Activated CD4-positive, alpha-beta T cell treated with anti-CD3 and anti-CD28 coated beads for 36 hours (primary cell): ENCODE measurements at regions of chr15 and their contacts with region 1.

Region 1: DNA sequence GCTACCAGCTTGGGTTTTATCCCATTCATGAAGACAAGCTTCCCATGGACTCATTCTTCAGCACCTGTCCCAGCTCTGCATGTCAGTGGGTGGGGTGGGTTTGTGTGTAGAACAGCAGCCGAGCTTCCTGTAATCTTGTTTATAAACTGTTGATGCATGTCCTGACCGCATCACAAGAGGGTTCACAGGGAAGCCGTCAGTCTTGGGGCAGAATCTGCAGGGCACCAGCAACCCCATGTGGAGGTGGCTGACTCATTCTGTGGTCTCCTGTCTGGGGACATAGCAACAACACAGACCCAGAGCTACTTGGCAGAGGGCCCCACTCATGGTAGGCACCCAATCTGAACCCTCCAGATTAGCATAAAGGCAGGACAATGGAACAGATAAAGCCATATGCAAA is 35.6 kb downstream of the DAPK2 start:
- DNase-seq: peak; percentile 90
- ATAC-seq: peak; percentile 78
- H3K4me3 Mint-ChIP-seq: peak overlapping the region; percentile 31
- H3K27ac Mint-ChIP-seq: peak overlapping the region; percentile 87
- H3K4me1 Mint-ChIP-seq: peaks cover 45% of the 10 kb centered on the region
- H3K27me3 Mint-ChIP-seq: no peaks in the 10 kb centered on the region

Region 2: GRCh38 chr15:63374686-63375520 is 635.8 kb before region 1 on chr15:
- CTCF ChIA-PET with region 1: interaction called, 4 read pairs
- POLR2A ChIA-PET with region 1: no interaction called
- intact Hi-C with region 1: loop called in 1 of 2 experiments (anchors 2 kb)
- DNase-seq: peak; percentile 73
- ATAC-seq: peak; percentile 25
- H3K4me3 Mint-ChIP-seq: peak overlapping the region; percentile 15
- H3K27ac Mint-ChIP-seq: peak overlapping the region; percentile 67
- H3K4me1 Mint-ChIP-seq: peaks cover 51% of the 10 kb centered on the region
- H3K27me3 Mint-ChIP-seq: peaks cover 24% of the 10 kb centered on the region

Region 3: DNA sequence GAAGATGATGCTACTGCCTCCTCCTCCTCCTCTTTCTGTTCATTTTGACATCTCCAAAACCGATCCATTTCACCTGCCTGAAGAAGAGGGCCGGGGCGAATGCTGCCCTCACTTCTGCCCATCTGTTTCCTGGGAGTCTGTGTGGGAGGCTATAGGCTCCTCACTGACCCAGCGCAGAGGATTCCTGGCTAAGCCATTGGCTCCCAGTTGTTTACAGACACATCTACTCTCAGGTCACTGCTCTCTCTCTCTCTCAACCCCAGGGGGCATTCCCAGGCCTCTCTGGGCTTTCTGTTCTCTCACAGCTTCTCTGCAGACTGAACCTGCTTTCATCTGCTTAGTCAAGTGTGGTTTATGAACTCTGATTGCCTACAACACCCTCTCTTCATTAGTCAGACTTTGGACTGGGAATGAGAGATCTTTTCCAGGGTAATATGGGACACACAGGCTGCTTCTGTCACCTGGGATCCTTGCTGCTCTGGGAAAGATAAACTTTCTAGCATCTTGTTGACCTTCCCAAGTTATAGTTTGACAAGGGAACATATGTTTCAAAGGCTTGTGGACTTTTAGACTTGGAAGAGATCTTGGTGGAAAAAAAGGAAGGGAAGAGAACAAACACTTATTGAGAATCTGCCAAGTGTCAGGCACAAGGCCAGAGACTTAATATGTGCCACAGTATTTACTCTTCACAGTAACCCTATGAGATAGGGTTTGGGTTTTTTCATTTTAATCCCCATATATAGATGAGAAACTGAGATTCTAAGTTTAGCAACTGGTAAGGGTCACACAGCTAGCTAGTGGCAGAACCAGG is 536.5 kb before region 1 on chr15:
- CTCF ChIA-PET with region 1: no interaction called
- POLR2A ChIA-PET with region 1: no interaction called
- intact Hi-C with region 1: loop called in 1 of 2 experiments (anchors 5 kb)
- DNase-seq: peak; percentile 84
- ATAC-seq: peak; percentile 79
- H3K4me3 Mint-ChIP-seq: peak overlapping the region; percentile 9
- H3K27ac Mint-ChIP-seq: peak overlapping the region; percentile 94
- H3K4me1 Mint-ChIP-seq: peaks cover 59% of the 10 kb centered on the region
- H3K27me3 Mint-ChIP-seq: no peaks in the 10 kb centered on the region

Region 4: GRCh38 chr15:63776443-63776842 is 234.3 kb before region 1 on chr15:
- CTCF ChIA-PET with region 1: no interaction called
- POLR2A ChIA-PET with region 1: no interaction called
- intact Hi-C with region 1: no loop called
- DNase-seq: no peak
- ATAC-seq: no peak
- H3K4me3 Mint-ChIP-seq: no peak overlapping the region
- H3K27ac Mint-ChIP-seq: no peak overlapping the region
- H3K4me1 Mint-ChIP-seq: peaks cover 28% of the 10 kb centered on the region
- H3K27me3 Mint-ChIP-seq: no peaks in the 10 kb centered on the region

Region 5: DNA sequence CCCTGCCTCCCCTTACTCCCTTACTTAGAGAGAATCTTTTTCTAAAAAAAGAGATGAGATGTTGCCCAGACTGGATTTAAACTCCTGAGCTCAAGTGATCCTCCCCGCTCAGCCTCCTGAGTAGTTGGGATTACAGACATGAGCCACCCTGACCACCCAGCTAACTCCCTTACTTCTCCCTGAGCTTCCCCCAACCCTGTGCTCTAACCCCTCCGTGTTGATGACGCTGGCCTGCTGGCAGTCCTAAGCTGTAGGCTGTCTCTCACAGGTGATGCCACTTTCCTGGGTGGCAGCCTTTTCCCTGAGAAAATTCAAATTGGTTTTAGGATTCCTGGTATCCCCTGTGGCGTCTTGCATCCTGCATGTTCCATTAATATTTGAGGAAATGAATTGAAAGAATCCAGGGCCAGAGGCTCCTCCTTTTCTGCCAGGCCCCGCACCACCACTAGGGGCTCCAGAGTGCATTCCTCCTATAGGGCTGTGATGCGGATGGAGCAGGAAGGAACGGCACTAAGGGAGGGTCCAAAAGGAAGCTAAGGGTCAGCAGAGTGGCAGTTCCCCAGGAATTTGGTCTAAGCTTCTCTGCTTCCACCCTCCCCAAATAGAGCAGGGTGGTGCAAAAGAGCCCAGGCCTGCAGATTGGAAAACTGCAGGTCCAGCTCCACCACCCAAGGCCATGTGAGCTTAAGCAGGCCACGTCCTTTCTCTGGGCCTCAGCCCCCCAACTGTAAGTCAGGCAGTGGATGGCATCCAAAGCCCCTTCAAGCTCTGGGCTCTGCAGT is 65.5 kb before region 1 on chr15:
- CTCF ChIA-PET with region 1: interaction called, 7 read pairs
- POLR2A ChIA-PET with region 1: no interaction called
- intact Hi-C with region 1: loop called in 1 of 2 experiments (anchors 5 kb)
- DNase-seq: peak; percentile 85
- ATAC-seq: peak; percentile 97
- H3K4me3 Mint-ChIP-seq: no peak overlapping the region
- H3K27ac Mint-ChIP-seq: peak overlapping the region; percentile 51
- H3K4me1 Mint-ChIP-seq: peaks cover 4% of the 10 kb centered on the region
- H3K27me3 Mint-ChIP-seq: no peaks in the 10 kb centered on the region

Region 6: GRCh38 chr15:63970621-63971426 is 39.9 kb before region 1 on chr15:
- CTCF ChIA-PET with region 1: interaction called, 6 read pairs
- POLR2A ChIA-PET with region 1: interaction called, 11 read pairs
- intact Hi-C with region 1: loop called (anchors 1 to 2 kb)
- DNase-seq: peak; percentile 65
- ATAC-seq: peak; percentile 85
- H3K4me3 Mint-ChIP-seq: no peak overlapping the region
- H3K27ac Mint-ChIP-seq: peak overlapping the region; percentile 97
- H3K4me1 Mint-ChIP-seq: peaks cover 31% of the 10 kb centered on the region
- H3K27me3 Mint-ChIP-seq: no peaks in the 10 kb centered on the region